HepG2 (cell line): ENCODE measurements at regions of chr10 and their contacts with region 1.

Region 1: GRCh38 chr10:16436758-16437539 is at the start of gene PTER:
- DNase-seq: peak; percentile 78
- ATAC-seq: peak; percentile 97
- H3K4me3 ChIP-seq: peak within 1 kb of the TSS; percentile 42 to 72 (median 68)
- H3K27ac ChIP-seq: peak within 1 kb of the TSS; percentile 53
- H3K4me1 ChIP-seq: peaks cover 20% of the 10 kb centered on the region
- H3K27me3 ChIP-seq: no peaks in the 10 kb centered on the region
- CTCF ChIP-seq: no peak
- EP300 ChIP-seq: no peak
- POLR2A ChIP-seq: peak; percentile 77 to 84
- RAD21 ChIP-seq: no peak
- total RNA-seq, gene PTER: 6.1 and 8.6 TPM in 2 replicates

Region 2: DNA sequence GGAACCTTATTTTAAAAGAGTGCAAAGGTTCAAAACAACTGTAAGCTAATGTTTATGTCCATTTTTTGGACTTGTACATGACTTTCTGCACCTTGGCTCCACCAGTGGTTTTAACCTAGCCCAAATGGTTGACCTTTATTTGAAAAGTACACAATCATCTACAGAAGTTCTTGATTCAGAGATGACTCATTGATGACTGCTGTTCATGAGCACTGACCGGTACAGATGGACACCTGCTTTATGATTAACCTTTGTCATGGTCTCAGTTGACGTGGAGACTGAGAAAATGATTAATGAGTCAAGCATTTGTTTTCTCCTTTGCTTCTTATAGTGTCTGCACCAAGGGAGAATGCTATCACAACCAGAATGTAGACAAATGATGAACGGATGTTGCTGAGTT is 55.9 kb before region 1 on chr10:
- CTCF ChIA-PET with region 1: no interaction called
- POLR2A ChIA-PET with region 1: no interaction called
- in situ Hi-C with region 1: no loop called
- intact Hi-C with region 1: loop called (anchors 5 kb)
- DNase-seq: peak; percentile 86
- ATAC-seq: peak; percentile 98
- H3K4me3 ChIP-seq: peak overlapping the region in 1 of 3 experiments; percentile 9; a peak in 1 of 6 replicates
- H3K27ac ChIP-seq: peak overlapping the region; percentile 45
- H3K4me1 ChIP-seq: peaks cover 46% of the 10 kb centered on the region
- H3K27me3 ChIP-seq: no peaks in the 10 kb centered on the region
- CTCF ChIP-seq: no peak
- EP300 ChIP-seq: peak in 1 of 2 experiments; percentile 72; a peak in 2 of 4 replicates
- POLR2A ChIP-seq: no peak
- RAD21 ChIP-seq: no peak